ENCODE measurements at regions of chr11 and their contacts with region 1.

Region 1: GRCh38 chr11:30908272-30908671 is 322.1 kb upstream of the MPPED2 start:
- DNase-seq: no peak
- H3K4me3 ChIP-seq: no peak overlapping the region
- H3K27ac ChIP-seq: no peak overlapping the region
- H3K4me1 ChIP-seq: no peaks in the 10 kb centered on the region
- H3K27me3 ChIP-seq: no peaks in the 10 kb centered on the region
- CTCF ChIP-seq: no peak
- EP300 ChIP-seq: no peak
- POLR2A ChIP-seq: no peak

Region 2: GRCh38 chr11:30956751-30957150 is 48.5 kb after region 1 on chr11:
- in situ Hi-C with region 1: no loop called
- intact Hi-C with region 1: loop called (anchors 5 kb)
- DNase-seq: no peak
- H3K4me3 ChIP-seq: no peak overlapping the region
- H3K27ac ChIP-seq: no peak overlapping the region
- H3K4me1 ChIP-seq: no peaks in the 10 kb centered on the region
- H3K27me3 ChIP-seq: no peaks in the 10 kb centered on the region
- CTCF ChIP-seq: no peak
- EP300 ChIP-seq: no peak
- POLR2A ChIP-seq: no peak